Endothelial cell of umbilical vein (primary cell): ENCODE measurements at regions of chr6 and their contacts with region 1.

Region 1: GRCh38 chr6:121652726-121653623 is 217.5 kb downstream of the GJA1 start:
- DNase-seq: peak; percentile 96
- H3K4me3 ChIP-seq: peak overlapping the region in 1 of 3 experiments; percentile 57
- H3K27ac ChIP-seq: peak overlapping the region; percentile 98
- H3K4me1 ChIP-seq: peaks cover 51% of the 10 kb centered on the region
- H3K27me3 ChIP-seq: no peaks in the 10 kb centered on the region
- CTCF ChIP-seq: no peak
- POLR2A ChIP-seq: peak; percentile 29

Region 2: DNA sequence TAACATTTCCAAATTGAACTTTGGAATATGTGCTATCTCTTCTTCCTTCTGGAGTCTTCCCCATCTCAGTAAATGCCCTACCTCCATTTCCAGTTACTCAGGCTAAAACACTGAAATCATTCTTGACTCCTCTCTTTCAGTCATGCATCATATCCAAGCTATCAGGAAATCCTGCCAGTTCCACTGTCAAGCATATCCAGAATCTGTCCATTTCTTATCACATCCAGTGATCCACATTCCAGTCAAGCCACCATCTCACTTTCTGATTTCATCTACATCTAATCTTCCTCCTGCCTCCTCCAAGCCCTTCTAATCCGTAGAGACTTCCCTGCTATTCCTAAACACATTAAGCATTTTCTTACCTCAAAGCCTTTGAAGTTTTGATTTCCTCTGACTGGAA is 303.4 kb before region 1 on chr6:
- CTCF ChIA-PET with region 1: no interaction called
- POLR2A ChIA-PET with region 1: no interaction called
- dilution Hi-C with region 1: no loop called
- intact Hi-C with region 1: no loop called
- DNase-seq: no peak
- H3K4me3 ChIP-seq: no peak overlapping the region
- H3K27ac ChIP-seq: no peak overlapping the region
- H3K4me1 ChIP-seq: no peaks in the 10 kb centered on the region
- H3K27me3 ChIP-seq: peaks cover 0 to 1% of the 10 kb centered on the region in 2 experiments
- CTCF ChIP-seq: no peak
- POLR2A ChIP-seq: no peak

Region 3: GRCh38 chr6:121482004-121482693 is 170.8 kb before region 1 on chr6:
- CTCF ChIA-PET with region 1: no interaction called
- POLR2A ChIA-PET with region 1: no interaction called
- dilution Hi-C with region 1: no loop called
- intact Hi-C with region 1: loop called (anchors 1 kb)
- DNase-seq: peak; percentile 89
- H3K4me3 ChIP-seq: no peak overlapping the region
- H3K27ac ChIP-seq: peak overlapping the region; percentile 72
- H3K4me1 ChIP-seq: peaks cover 9% of the 10 kb centered on the region
- H3K27me3 ChIP-seq: no peaks in the 10 kb centered on the region
- CTCF ChIP-seq: no peak
- POLR2A ChIP-seq: no peak

Region 4: GRCh38 chr6:121666814-121667213 is 13.8 kb after region 1 on chr6:
- CTCF ChIA-PET with region 1: interaction called, 4 read pairs
- POLR2A ChIA-PET with region 1: interaction called, 3 read pairs
- dilution Hi-C with region 1: no loop called
- intact Hi-C with region 1: loop called (anchors 1 kb)
- DNase-seq: peak; percentile 96
- H3K4me3 ChIP-seq: no peak overlapping the region
- H3K27ac ChIP-seq: no peak overlapping the region
- H3K4me1 ChIP-seq: peaks cover 14% of the 10 kb centered on the region
- H3K27me3 ChIP-seq: no peaks in the 10 kb centered on the region
- CTCF ChIP-seq: no peak
- POLR2A ChIP-seq: no peak

Region 5: DNA sequence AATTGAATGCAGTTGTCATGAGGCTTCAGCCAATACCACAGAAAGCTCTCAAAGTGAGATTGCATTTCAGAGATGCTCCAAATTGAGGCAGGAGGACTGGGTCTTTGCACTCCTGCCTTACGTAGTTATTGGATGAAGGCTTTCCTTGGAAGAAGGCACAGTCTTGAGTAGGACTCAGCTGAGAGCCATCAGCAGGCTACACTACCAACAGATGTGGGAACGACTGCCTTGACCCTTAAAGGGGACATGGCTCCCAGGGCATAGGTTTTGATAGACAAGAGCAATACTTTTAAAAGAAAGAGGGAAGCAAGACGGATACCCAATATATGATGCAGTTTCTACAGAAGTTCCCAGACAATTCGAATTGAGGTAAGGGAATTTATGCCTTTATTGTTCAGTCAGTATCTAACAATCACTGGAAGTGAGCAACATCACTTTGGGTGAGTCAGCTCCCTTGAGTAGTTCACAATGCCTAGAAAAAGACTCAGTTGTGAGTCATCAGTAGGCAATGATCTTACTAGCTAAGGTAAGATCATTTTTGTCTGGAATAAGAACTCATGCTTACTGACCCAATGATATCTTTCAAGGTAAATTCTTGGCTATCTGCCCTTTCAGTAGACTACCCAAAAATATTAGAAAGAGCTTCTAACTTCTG is 173.3 kb after region 1 on chr6:
- CTCF ChIA-PET with region 1: interaction called, 3 read pairs
- POLR2A ChIA-PET with region 1: no interaction called
- dilution Hi-C with region 1: no loop called
- intact Hi-C with region 1: loop called (anchors 2 kb)
- DNase-seq: peak; percentile 94
- H3K4me3 ChIP-seq: no peak overlapping the region
- H3K27ac ChIP-seq: peak overlapping the region; percentile 86
- H3K4me1 ChIP-seq: peaks cover 15% of the 10 kb centered on the region
- H3K27me3 ChIP-seq: no peaks in the 10 kb centered on the region
- CTCF ChIP-seq: no peak
- POLR2A ChIP-seq: no peak